Transverse colon (tissue), 4 donors: ENCODE measurements at regions of chr1 and their contacts with region 1.

Region 1: GRCh38 chr1:8992936-8993687 is 33.1 kb downstream of the SLC2A7 start:
- DNase-seq: no peak
- H3K4me3 ChIP-seq: no peak overlapping the region
- H3K27ac ChIP-seq: no peak overlapping the region
- H3K4me1 ChIP-seq: no peaks in the 10 kb centered on the region
- H3K27me3 ChIP-seq: no peaks in the 10 kb centered on the region
- CTCF ChIP-seq: no peak
- EP300 ChIP-seq: no peak
- POLR2A ChIP-seq: no peak

Region 2: GRCh38 chr1:8910914-8911313 is 82.2 kb before region 1 on chr1:
- in situ Hi-C with region 1: loop called in 1 of 4 experiments (anchors 10 kb)
- intact Hi-C with region 1: no loop called
- DNase-seq: no peak
- H3K4me3 ChIP-seq: no peak overlapping the region
- H3K27ac ChIP-seq: no peak overlapping the region
- H3K4me1 ChIP-seq: no peaks in the 10 kb centered on the region
- H3K27me3 ChIP-seq: no peaks in the 10 kb centered on the region
- CTCF ChIP-seq: no peak
- EP300 ChIP-seq: no peak
- POLR2A ChIP-seq: no peak

Region 3: GRCh38 chr1:9004700-9005394 is 11.7 kb after region 1 on chr1:
- in situ Hi-C with region 1: no loop called
- intact Hi-C with region 1: no loop called
- DNase-seq: peak; percentile 87
- H3K4me3 ChIP-seq: no peak overlapping the region
- H3K27ac ChIP-seq: no peak overlapping the region
- H3K4me1 ChIP-seq: peaks cover 0 to 10% (median 1%) of the 10 kb centered on the region in 4 donors
- H3K27me3 ChIP-seq: no peaks in the 10 kb centered on the region
- CTCF ChIP-seq: peak; percentile 87 to 97 (median 93)
- EP300 ChIP-seq: no peak
- POLR2A ChIP-seq: no peak